ENCODE measurements at regions of chr3 and their contacts with region 1.

Region 1: GRCh38 chr3:179503626-179504025 is 52.4 kb upstream of the GNB4 start:
- DNase-seq: no peak
- H3K4me3 ChIP-seq: no peak overlapping the region
- H3K27ac ChIP-seq: no peak overlapping the region
- H3K4me1 ChIP-seq: no peaks in the 10 kb centered on the region
- H3K27me3 ChIP-seq: no peaks in the 10 kb centered on the region
- CTCF ChIP-seq: no peak
- EP300 ChIP-seq: no peak
- POLR2A ChIP-seq: no peak
- RAD21 ChIP-seq: no peak

Region 2: GRCh38 chr3:179486806-179487205 is 16.8 kb before region 1 on chr3:
- CTCF ChIA-PET with region 1: interaction called, 10 read pairs
- POLR2A ChIA-PET with region 1: no interaction called
- DNase-seq: no peak
- H3K4me3 ChIP-seq: no peak overlapping the region
- H3K27ac ChIP-seq: no peak overlapping the region
- H3K4me1 ChIP-seq: no peaks in the 10 kb centered on the region
- H3K27me3 ChIP-seq: no peaks in the 10 kb centered on the region
- CTCF ChIP-seq: no peak
- EP300 ChIP-seq: no peak
- POLR2A ChIP-seq: no peak
- RAD21 ChIP-seq: no peak

Region 3: DNA sequence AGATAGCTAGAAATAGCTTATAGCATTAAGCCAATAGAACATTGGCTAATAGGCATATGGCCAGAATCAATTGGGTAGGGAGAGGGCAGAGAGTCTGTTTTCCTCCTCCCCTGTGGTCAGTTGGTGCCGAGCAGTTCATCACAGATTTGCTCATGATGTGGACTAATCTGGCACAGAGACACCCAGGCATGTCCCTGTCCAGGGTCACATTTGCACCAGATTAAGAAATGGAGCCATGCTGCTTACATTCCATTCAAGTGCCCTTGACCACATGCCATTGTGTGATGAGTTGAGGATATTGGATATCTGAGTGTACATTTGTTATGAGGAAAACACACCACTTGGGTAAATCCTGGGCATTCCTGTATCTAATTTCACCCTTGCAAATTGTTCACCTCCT is 202.6 kb after region 1 on chr3:
- CTCF ChIA-PET with region 1: no interaction called
- POLR2A ChIA-PET with region 1: no interaction called
- DNase-seq: no peak
- H3K4me3 ChIP-seq: no peak overlapping the region
- H3K27ac ChIP-seq: no peak overlapping the region
- H3K4me1 ChIP-seq: peaks cover 2 to 22% (median 14%) of the 10 kb centered on the region in 4 experiments; a peak in 5 of 7 replicates
- H3K27me3 ChIP-seq: no peaks in the 10 kb centered on the region
- CTCF ChIP-seq: no peak
- EP300 ChIP-seq: no peak
- POLR2A ChIP-seq: no peak
- RAD21 ChIP-seq: no peak

Measured in H1 (cell line).